ENCODE measurements at regions of chr2 and their contacts with region 1.

Region 1: GRCh38 chr2:7773362-7774360 is 856.4 kb downstream of the RNF144A start:
- DNase-seq: peak; percentile 79
- H3K4me3 Mint-ChIP-seq: peak overlapping the region; percentile 25
- H3K27ac Mint-ChIP-seq: peak overlapping the region; percentile 84
- H3K4me1 Mint-ChIP-seq: peaks cover 36% of the 10 kb centered on the region
- H3K27me3 Mint-ChIP-seq: no peaks in the 10 kb centered on the region

Region 2: DNA sequence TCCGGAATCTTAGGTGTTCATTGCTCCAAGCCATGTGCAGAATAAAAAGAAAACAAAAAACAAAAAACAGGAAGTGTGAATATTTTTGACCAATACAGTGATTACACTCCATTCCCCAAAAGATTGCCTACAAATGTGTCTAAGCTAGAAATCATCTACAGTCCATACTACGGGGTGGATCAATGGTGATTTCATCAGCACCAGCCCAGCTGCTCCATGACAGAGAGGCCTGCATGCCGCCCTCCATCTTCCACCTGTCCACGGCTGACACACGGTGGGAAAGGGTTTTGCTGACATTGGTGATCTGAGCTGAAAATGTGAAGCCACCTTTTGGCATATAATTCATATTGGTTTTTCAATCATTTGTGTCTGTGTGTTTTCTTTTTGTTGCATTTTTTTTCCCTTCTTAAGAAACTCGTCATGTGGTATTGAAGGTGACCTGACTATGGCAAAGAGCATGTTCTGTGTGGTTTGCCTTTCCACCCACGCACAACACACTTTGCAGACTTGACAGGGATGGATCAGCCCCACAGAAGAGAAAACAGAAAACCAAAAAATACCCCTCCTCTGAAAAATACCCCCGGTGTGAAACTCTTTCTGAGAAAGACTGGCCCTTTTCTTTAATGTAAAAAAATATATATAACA is 323.4 kb before region 1 on chr2:
- intact Hi-C with region 1: loop called (anchors 1 kb)
- DNase-seq: peak; percentile 90
- H3K4me3 Mint-ChIP-seq: peak overlapping the region; percentile 58
- H3K27ac Mint-ChIP-seq: peak overlapping the region; percentile 100
- H3K4me1 Mint-ChIP-seq: peaks cover 70% of the 10 kb centered on the region
- H3K27me3 Mint-ChIP-seq: no peaks in the 10 kb centered on the region

Region 3: DNA sequence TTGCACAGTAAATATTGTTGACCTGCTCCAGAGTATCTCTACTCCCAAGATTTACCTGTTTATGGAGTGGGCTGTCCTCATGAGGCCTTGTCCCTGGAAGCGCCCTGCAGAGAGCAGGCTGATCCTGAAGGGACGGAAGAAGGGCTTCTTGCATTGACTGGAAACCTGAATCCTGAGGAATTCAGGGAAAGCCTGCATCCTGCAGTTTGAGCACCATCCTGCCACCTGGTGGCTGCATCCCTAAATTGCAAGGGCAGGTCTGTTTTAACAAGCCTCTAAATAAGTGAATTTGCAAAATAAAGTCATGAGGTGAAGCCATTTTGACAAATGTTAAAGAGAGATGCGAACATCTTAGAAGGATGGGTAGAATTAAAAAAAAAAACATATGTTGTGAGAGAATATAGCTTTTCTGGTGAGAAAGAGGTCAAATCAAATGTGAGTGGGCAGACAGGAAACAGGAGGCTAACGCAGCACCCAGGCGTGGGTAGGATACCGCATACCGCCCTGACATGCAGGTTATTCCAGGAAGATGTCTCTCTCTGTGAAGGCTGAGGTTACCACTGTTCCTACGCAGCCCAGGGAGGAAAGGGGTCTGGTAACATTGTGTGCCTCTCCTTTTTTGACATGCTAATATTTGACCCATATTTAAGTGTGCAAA is 101.5 kb before region 1 on chr2:
- intact Hi-C with region 1: loop called (anchors 2 kb)
- DNase-seq: peak; percentile 85
- H3K4me3 Mint-ChIP-seq: peak overlapping the region; percentile 70
- H3K27ac Mint-ChIP-seq: peak overlapping the region; percentile 98
- H3K4me1 Mint-ChIP-seq: peaks cover 60% of the 10 kb centered on the region
- H3K27me3 Mint-ChIP-seq: no peaks in the 10 kb centered on the region

Region 4: DNA sequence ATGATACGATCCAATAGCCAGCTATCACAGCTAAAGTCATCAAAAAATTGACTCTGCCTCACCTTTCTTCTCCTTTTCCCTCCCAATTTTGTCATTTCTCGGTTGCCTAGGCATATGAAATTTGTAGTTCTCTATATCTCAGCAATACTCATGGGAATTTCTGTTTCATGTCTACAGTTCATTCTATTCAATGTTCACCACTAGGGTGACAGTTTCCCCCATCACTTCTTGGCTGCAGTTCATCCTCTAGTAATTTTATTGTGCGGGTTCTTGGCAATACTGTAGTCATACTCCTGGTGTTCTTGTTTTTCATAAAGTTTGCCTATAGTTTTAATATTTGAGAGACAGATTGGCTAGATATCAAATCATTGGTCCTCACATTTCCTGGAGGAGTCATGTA is 36.0 kb after region 1 on chr2:
- intact Hi-C with region 1: loop called (anchors 5 kb)
- DNase-seq: no peak
- H3K4me3 Mint-ChIP-seq: no peak overlapping the region
- H3K27ac Mint-ChIP-seq: no peak overlapping the region
- H3K4me1 Mint-ChIP-seq: no peaks in the 10 kb centered on the region
- H3K27me3 Mint-ChIP-seq: no peaks in the 10 kb centered on the region

Region 5: GRCh38 chr2:7984693-7985353 is 211.2 kb after region 1 on chr2:
- intact Hi-C with region 1: loop called (anchors 1 kb)
- DNase-seq: no peak
- H3K4me3 Mint-ChIP-seq: peak overlapping the region; percentile 13
- H3K27ac Mint-ChIP-seq: peak overlapping the region; percentile 87
- H3K4me1 Mint-ChIP-seq: peaks cover 17% of the 10 kb centered on the region
- H3K27me3 Mint-ChIP-seq: no peaks in the 10 kb centered on the region

Region 6: GRCh38 chr2:8477552-8478470 is 704.1 kb after region 1 on chr2:
- intact Hi-C with region 1: loop called (anchors 1 kb)
- DNase-seq: peak; percentile 76
- H3K4me3 Mint-ChIP-seq: peak overlapping the region; percentile 53
- H3K27ac Mint-ChIP-seq: peak overlapping the region; percentile 84
- H3K4me1 Mint-ChIP-seq: peaks cover 84% of the 10 kb centered on the region
- H3K27me3 Mint-ChIP-seq: no peaks in the 10 kb centered on the region